ENCODE measurements at regions of chr13 and their contacts with region 1.

Region 1: DNA sequence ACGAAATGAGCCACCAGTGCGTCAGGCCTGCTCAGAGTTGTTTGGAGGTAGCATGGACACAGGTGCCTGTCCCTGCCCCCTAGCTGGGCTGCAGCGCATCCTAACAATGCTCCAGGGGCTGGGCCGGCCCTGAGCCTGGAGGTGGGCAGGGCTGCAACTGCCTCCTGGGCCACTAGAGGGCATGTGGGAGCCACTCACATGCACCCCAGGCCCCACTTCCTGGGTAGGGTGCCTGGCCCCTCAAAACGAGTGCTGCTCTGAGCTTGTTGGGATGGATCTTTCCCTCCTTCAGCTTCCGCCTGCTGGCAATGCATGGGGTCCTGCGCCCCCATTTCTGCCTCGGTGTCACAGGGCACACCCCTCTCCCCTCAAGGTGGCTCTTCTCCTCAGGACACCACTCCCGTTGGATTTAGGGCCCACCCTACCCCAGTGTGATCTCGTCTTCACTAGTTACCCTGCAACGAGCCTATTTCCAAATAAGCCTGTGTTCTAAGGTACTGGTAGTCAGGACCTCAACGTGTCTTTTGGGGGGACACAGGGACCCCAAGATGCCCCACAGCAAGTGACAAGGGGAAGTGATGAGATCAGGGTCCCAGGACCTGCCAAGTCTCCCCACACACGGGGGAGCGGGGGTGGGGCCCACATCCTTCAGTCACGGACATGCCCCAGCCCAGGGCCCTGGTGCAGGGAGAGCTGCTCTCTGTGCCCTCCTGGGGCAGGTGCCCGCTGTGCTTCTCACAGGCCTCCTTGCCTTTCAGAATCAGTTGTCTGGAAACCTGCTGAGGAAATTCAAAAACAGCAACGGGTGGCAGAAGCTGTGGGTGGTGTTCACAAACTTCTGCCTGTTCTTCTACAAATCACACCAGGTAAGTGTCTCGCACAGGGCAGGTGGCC is 131.3 kb downstream of the STK24 start:
- DNase-seq: peak; percentile 75
- H3K4me3 Mint-ChIP-seq: no peak overlapping the region
- H3K27ac Mint-ChIP-seq: no peak overlapping the region
- H3K4me1 Mint-ChIP-seq: peaks cover 19% of the 10 kb centered on the region
- H3K27me3 Mint-ChIP-seq: no peaks in the 10 kb centered on the region
- CTCF ChIP-seq: peak; percentile 97

Region 2: DNA sequence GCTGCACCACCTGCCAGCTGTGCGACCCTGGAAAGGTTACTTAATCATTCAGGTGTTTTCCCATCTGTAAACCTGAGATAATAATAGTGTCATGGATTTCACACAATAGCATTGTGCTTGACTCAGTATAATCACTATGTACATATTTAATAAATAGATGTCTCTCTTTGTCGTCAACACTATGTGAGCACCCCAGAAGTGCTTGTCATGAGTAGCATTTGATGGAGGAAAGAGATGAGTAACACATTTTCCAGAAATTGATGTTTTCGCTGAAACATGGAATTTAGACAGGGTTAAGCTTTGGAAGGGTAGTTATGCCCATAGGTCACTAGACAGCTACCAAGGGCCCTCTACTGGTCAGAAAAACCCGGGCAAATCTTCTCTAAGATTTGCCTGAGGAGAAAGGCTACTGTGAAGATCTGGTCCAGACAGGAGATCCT is 1233.0 kb before region 1 on chr13:
- CTCF ChIA-PET with region 1: no interaction called
- POLR2A ChIA-PET with region 1: no interaction called
- intact Hi-C with region 1: no loop called
- DNase-seq: peak; percentile 75
- H3K4me3 Mint-ChIP-seq: no peak overlapping the region
- H3K27ac Mint-ChIP-seq: no peak overlapping the region
- H3K4me1 Mint-ChIP-seq: no peaks in the 10 kb centered on the region
- H3K27me3 Mint-ChIP-seq: no peaks in the 10 kb centered on the region
- CTCF ChIP-seq: peak; percentile 69

Region 3: DNA sequence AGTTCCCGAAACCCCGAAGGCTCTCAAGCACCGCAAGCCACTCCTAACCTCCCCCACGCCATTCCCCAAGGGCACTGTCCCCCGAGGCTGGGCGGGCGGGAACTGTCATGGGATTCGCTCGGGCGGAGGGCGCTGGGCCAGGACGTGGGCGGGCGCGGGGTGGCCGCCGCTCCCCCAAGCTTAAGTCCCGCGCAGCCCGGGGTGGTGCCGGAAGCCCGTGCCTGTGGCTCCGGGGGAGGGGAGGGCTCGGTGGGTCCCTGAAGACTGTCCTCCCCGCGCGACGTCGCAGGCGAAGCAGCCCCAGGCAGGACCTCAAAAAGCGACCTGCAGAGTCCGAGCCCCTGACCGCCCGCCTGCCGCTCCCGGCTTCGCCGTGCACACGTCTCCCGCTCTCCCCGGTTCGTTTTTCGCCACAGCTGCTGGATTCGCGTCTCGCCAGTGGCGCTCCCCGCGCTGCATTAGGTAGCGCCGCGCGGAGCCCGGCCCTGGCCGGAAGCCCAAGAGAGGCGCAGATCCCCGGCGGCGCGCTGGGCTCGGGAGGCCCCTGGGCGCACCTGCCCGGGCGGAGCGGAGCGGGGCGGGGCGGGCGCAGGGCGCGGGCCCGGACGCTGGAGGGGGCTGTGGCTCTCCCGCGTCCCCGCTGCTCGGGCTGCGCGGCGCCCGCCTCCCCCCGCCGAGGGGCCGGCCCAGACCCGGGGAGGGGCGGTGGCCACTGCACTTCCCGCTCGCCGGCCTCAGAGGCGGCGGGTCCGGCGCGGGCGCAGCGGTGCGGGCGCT is 303.0 kb before region 1 on chr13 and contains the start of gene FARP1:
- CTCF ChIA-PET with region 1: no interaction called
- POLR2A ChIA-PET with region 1: no interaction called
- intact Hi-C with region 1: loop called (anchors 5 kb)
- DNase-seq: peak; percentile 70
- H3K4me3 Mint-ChIP-seq: peak within 1 kb of the TSS; percentile 76
- H3K27ac Mint-ChIP-seq: peak within 1 kb of the TSS; percentile 46
- H3K4me1 Mint-ChIP-seq: peaks cover 16% of the 10 kb centered on the region
- H3K27me3 Mint-ChIP-seq: peaks cover 12% of the 10 kb centered on the region
- CTCF ChIP-seq: peak; percentile 30
- total RNA-seq, gene FARP1: 20.7 and 30.1 TPM in 2 replicates

Region 4: GRCh38 chr13:98484289-98485219 is 39.0 kb after region 1 on chr13:
- CTCF ChIA-PET with region 1: interaction called, 15 read pairs
- POLR2A ChIA-PET with region 1: interaction called, 3 read pairs
- intact Hi-C with region 1: no loop called
- DNase-seq: peak; percentile 99
- H3K4me3 Mint-ChIP-seq: peak overlapping the region; percentile 68
- H3K27ac Mint-ChIP-seq: peak overlapping the region; percentile 94
- H3K4me1 Mint-ChIP-seq: peaks cover 47% of the 10 kb centered on the region
- H3K27me3 Mint-ChIP-seq: no peaks in the 10 kb centered on the region
- CTCF ChIP-seq: no peak

Region 5: GRCh38 chr13:98576963-98577822 is 131.6 kb after region 1 on chr13 and contains the start of gene STK24:
- CTCF ChIA-PET with region 1: interaction called, 8 read pairs
- POLR2A ChIA-PET with region 1: interaction called, 4 read pairs
- intact Hi-C with region 1: loop called (anchors 2 kb)
- DNase-seq: peak; percentile 67
- H3K4me3 Mint-ChIP-seq: peak within 1 kb of the TSS; percentile 82
- H3K27ac Mint-ChIP-seq: peak within 1 kb of the TSS; percentile 83
- H3K4me1 Mint-ChIP-seq: peaks cover 22% of the 10 kb centered on the region
- H3K27me3 Mint-ChIP-seq: no peaks in the 10 kb centered on the region
- CTCF ChIP-seq: no peak
- total RNA-seq, gene STK24: 200 and 215 TPM in 2 replicates

Region 6: DNA sequence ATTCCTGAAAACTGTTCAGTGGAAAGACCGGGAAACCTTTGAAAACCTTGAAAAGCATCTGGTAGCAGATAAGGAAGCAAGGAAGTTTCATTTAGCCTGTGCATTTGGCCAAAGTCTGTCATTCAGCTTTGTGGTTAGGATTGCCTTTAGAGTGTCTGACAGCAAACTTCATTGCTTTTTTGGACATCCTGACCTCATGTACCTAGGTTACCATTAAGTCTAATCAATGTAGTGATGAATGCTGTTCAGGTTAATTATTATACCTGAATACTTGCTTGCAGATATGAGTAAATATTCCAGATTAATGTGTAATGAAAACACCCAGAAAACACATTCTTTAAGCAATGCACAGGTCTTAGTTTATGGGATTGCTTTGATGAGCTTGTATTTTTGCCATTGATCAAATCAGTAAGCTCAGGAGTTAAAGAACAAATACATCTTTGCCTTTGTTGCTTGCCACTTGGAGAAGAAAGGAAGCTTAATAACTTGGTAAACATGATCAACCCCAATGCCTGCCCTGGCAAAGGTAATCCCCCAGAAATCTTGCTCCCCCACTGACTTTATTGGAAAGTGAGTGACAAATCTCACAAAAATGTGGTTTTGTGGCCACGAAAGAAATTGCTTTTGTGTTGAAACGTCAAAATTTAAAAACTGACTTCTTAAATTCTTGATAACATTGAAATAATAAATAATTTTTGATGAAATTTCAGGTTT is 219.5 kb after region 1 on chr13:
- CTCF ChIA-PET with region 1: interaction called, 50 read pairs
- POLR2A ChIA-PET with region 1: no interaction called
- intact Hi-C with region 1: no loop called
- DNase-seq: no peak
- H3K4me3 Mint-ChIP-seq: no peak overlapping the region
- H3K27ac Mint-ChIP-seq: no peak overlapping the region
- H3K4me1 Mint-ChIP-seq: peaks cover 9% of the 10 kb centered on the region
- H3K27me3 Mint-ChIP-seq: peaks cover 30% of the 10 kb centered on the region
- CTCF ChIP-seq: no peak

Region 7: DNA sequence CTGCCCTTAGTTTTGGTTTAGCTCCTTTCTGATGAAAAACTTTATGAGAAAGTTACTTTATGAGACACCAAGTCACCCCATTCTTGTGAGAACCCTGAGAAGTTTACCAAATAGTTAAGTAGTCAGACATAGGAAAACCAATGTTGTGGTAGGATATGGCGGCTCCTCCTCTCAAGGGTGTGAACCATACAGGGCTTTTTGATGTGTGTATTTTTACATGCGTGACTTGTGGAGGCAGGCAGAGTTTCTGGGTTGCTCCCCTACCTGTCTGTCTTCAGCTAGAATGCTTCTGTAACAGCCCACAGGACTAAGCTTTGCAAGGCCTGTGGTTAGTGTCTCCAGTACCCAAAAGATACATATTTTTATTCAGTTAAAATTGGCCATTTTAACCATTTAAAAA is 773.4 kb after region 1 on chr13:
- CTCF ChIA-PET with region 1: no interaction called
- POLR2A ChIA-PET with region 1: no interaction called
- intact Hi-C with region 1: no loop called
- DNase-seq: no peak
- H3K4me3 Mint-ChIP-seq: no peak overlapping the region
- H3K27ac Mint-ChIP-seq: no peak overlapping the region
- H3K4me1 Mint-ChIP-seq: peaks cover 16% of the 10 kb centered on the region
- H3K27me3 Mint-ChIP-seq: no peaks in the 10 kb centered on the region
- CTCF ChIP-seq: no peak